Psoas muscle (tissue), 8 donors: ENCODE measurements at regions of chr3 and their contacts with region 1.

Region 1: GRCh38 chr3:46078712-46079400 is 51.6 kb upstream of the XCR1 start:
- DNase-seq: peak; percentile 76 to 83
- ATAC-seq: peak; percentile 97 to 99 (median 98)
- H3K4me3 ChIP-seq: peak overlapping the region; percentile 37
- H3K27ac ChIP-seq: no peak overlapping the region
- H3K4me1 ChIP-seq: peaks cover 9% of the 10 kb centered on the region
- H3K27me3 ChIP-seq: no peaks in the 10 kb centered on the region
- CTCF ChIP-seq: peak; percentile 98

Region 2: GRCh38 chr3:45760878-45761711 is 317.8 kb before region 1 on chr3:
- intact Hi-C with region 1: loop called (anchors 2 to 10 kb)
- DNase-seq: peak in 1 of 2 donors; percentile 80
- ATAC-seq: peak; percentile 90 to 99 (median 95)
- H3K4me3 ChIP-seq: no peak overlapping the region
- H3K27ac ChIP-seq: no peak overlapping the region
- H3K4me1 ChIP-seq: no peaks in the 10 kb centered on the region
- H3K27me3 ChIP-seq: no peaks in the 10 kb centered on the region
- CTCF ChIP-seq: peak; percentile 69

Region 3: GRCh38 chr3:45841757-45842491 is 236.9 kb before region 1 on chr3 and contains the start of gene LZTFL1:
- intact Hi-C with region 1: loop called in 1 of 2 experiments (anchors 5 kb)
- DNase-seq: peak; percentile 90 to 95
- ATAC-seq: peak; percentile 97 to 99 (median 98)
- H3K4me3 ChIP-seq: peak within 1 kb of the TSS; percentile 98
- H3K27ac ChIP-seq: peak within 1 kb of the TSS; percentile 61
- H3K4me1 ChIP-seq: peaks cover 8% of the 10 kb centered on the region
- H3K27me3 ChIP-seq: no peaks in the 10 kb centered on the region
- CTCF ChIP-seq: no peak
- total RNA-seq, gene LZTFL1: 4.2 to 5.6 (median 5.4) TPM

Region 4: DNA sequence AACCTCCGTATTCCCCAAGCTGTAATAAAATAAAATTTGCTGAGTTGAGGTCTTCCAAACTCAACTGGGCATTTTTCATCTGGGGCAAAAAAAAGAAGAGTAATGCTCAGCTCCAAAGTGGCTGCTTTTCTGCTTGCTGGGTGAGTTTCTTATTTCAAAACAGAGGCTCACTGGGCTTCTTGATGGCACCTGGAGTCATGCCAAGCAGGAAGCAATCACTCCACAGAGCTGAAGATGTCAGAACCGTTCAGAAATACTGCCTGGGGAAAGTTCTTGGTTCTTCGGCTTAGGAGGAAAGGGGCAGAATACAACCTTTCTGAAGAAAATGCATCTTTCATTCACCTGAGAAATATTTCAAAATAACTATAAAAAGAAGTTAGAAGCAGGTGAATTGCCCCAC is 188.5 kb before region 1 on chr3:
- intact Hi-C with region 1: no loop called
- DNase-seq: no peak
- ATAC-seq: no peak
- H3K4me3 ChIP-seq: no peak overlapping the region
- H3K27ac ChIP-seq: no peak overlapping the region
- H3K4me1 ChIP-seq: no peaks in the 10 kb centered on the region
- H3K27me3 ChIP-seq: no peaks in the 10 kb centered on the region
- CTCF ChIP-seq: no peak

Region 5: GRCh38 chr3:45938864-45939263 is 140.0 kb before region 1 on chr3:
- intact Hi-C with region 1: loop called (anchors 1 to 2 kb)
- DNase-seq: peak; percentile 76 to 88
- ATAC-seq: peak; percentile 92 to 96 (median 95)
- H3K4me3 ChIP-seq: no peak overlapping the region
- H3K27ac ChIP-seq: peak overlapping the region; percentile 78
- H3K4me1 ChIP-seq: peaks cover 28% of the 10 kb centered on the region
- H3K27me3 ChIP-seq: no peaks in the 10 kb centered on the region
- CTCF ChIP-seq: peak; percentile 90

Region 6: GRCh38 chr3:46006238-46007032 is 72.4 kb before region 1 on chr3:
- intact Hi-C with region 1: loop called in 1 of 2 experiments (anchors 5 kb)
- DNase-seq: no peak
- ATAC-seq: peak; percentile 23 to 63 (median 44)
- H3K4me3 ChIP-seq: no peak overlapping the region
- H3K27ac ChIP-seq: peak overlapping the region; percentile 3
- H3K4me1 ChIP-seq: peaks cover 15% of the 10 kb centered on the region
- H3K27me3 ChIP-seq: no peaks in the 10 kb centered on the region
- CTCF ChIP-seq: no peak

Region 7: GRCh38 chr3:46098319-46098761 is 19.5 kb after region 1 on chr3:
- intact Hi-C with region 1: no loop called
- DNase-seq: peak; percentile 53 to 59
- ATAC-seq: peak in 3 of 4 donors; percentile 51 to 70 (median 62)
- H3K4me3 ChIP-seq: no peak overlapping the region
- H3K27ac ChIP-seq: peak overlapping the region; percentile 46
- H3K4me1 ChIP-seq: peaks cover 3% of the 10 kb centered on the region
- H3K27me3 ChIP-seq: no peaks in the 10 kb centered on the region
- CTCF ChIP-seq: no peak

Region 8: GRCh38 chr3:46378426-46378942 is 299.6 kb after region 1 on chr3:
- intact Hi-C with region 1: loop called in 1 of 2 experiments (anchors 5 kb)
- DNase-seq: peak; percentile 69 to 78
- ATAC-seq: peak; percentile 59 to 76 (median 66)
- H3K4me3 ChIP-seq: peak overlapping the region; percentile 17
- H3K27ac ChIP-seq: no peak overlapping the region
- H3K4me1 ChIP-seq: peaks cover 20% of the 10 kb centered on the region
- H3K27me3 ChIP-seq: no peaks in the 10 kb centered on the region
- CTCF ChIP-seq: peak; percentile 65